Activated CD8-positive, alpha-beta T cell treated with anti-CD3 and anti-CD28 coated beads for 36 hours (primary cell): ENCODE measurements at regions of chr7 and their contacts with region 1.

Region 1: DNA sequence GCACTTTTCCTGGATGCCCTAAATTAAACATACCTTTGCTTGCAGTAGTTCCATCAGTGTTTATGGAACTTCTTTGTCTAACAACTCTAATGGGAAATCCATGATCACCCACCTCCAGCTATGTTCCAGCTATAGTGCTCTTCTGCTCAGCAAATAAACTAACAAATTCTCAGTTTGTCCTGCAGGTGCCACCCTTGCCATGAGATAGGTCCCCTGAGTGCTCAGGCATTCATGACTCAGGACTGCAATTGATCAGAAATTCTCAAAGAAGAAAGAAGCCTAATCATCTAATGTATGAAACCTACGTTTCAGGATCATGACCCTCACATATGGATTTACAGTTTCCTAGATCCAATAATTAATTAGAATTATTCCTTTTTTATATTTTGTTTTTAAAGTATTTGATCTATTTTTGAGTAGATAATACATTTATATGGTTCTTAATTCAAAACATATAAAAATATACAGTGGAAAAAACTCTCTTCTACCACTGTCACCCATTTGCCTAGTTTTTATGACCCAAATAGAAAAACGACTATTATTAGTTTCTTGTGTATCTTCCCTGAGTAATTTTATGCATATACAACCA is 48.7 kb upstream of the DYNC1I1 start:
- DNase-seq: peak; percentile 8
- ATAC-seq: no peak
- H3K4me3 Mint-ChIP-seq: no peak overlapping the region
- H3K27ac Mint-ChIP-seq: no peak overlapping the region
- H3K4me1 Mint-ChIP-seq: no peaks in the 10 kb centered on the region
- H3K27me3 Mint-ChIP-seq: peaks cover 3% of the 10 kb centered on the region
- CTCF ChIP-seq: no peak

Region 2: DNA sequence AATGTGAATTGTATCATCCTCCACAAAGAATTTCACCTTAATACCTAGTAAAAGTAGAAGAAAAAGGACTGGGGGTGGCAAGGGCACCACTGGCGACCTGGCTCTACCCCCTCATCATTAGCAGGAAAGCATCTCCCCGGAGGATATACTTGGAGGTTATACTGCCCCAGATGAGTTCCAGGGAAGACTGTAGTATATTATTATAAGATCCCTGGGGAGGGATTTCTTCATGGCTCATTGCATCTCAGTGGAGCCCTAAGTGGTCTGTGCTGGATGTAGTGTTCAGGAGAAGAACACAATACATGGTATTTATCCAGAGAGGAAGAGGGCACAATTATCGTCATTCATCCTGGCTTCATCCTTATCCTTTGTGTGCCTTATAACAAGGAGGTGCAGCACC is 34.5 kb after region 1 on chr7:
- CTCF ChIA-PET with region 1: no interaction called
- POLR2A ChIA-PET with region 1: no interaction called
- intact Hi-C with region 1: no loop called
- DNase-seq: no peak
- ATAC-seq: no peak
- H3K4me3 Mint-ChIP-seq: no peak overlapping the region
- H3K27ac Mint-ChIP-seq: no peak overlapping the region
- H3K4me1 Mint-ChIP-seq: no peaks in the 10 kb centered on the region
- H3K27me3 Mint-ChIP-seq: peaks cover 8% of the 10 kb centered on the region
- CTCF ChIP-seq: no peak

Region 3: DNA sequence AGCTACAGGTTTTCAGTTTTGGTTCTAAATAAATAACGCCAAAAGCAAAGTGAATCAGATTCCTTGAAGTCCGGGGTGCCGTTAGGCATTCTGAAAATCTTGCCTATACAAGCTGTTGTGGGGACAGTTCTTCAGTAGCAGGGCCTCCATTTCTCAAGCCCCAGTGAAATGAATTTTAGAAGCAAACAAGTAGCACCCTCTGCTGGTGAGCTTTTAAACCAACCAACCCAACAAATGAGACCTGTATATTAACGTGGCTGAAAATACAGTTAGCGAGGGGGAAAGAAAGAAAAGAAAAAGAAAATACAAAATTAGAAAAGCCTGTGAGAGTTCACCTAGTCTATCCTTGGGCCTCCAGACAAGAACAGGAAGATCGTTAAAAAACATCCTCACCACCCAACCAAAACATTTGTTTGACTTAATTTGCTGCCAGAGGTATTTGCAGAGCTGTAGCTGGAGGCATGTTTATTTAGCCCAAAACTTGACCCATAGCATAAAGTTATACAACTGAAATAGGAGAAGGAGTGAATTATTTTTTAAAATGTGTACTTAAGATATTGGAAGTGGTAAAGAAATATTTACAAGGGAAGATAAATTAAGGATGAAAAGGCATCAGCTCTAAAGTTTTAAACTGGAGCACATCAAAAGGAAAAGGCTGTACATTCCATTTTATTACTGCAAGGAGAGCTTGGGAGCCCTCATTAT is 147.5 kb after region 1 on chr7:
- CTCF ChIA-PET with region 1: interaction called, 11 read pairs
- POLR2A ChIA-PET with region 1: no interaction called
- intact Hi-C with region 1: loop called (anchors 5 kb)
- DNase-seq: peak; percentile 13
- ATAC-seq: no peak
- H3K4me3 Mint-ChIP-seq: no peak overlapping the region
- H3K27ac Mint-ChIP-seq: no peak overlapping the region
- H3K4me1 Mint-ChIP-seq: no peaks in the 10 kb centered on the region
- H3K27me3 Mint-ChIP-seq: peaks cover 12% of the 10 kb centered on the region
- CTCF ChIP-seq: peak; percentile 31